ENCODE measurements at regions of chr6 and their contacts with region 1.

Region 1: GRCh38 chr6:140436013-140436811 is 1061.8 kb upstream of the CITED2 start:
- DNase-seq: peak; percentile 89
- H3K4me3 ChIP-seq: no peak overlapping the region
- H3K27me3 ChIP-seq: no peaks in the 10 kb centered on the region
- CTCF ChIP-seq: no peak

Region 2: GRCh38 chr6:140537819-140538705 is 101.8 kb after region 1 on chr6:
- CTCF ChIA-PET with region 1: no interaction called
- POLR2A ChIA-PET with region 1: interaction called, 13 read pairs
- DNase-seq: peak; percentile 100
- H3K4me3 ChIP-seq: no peak overlapping the region
- H3K27me3 ChIP-seq: no peaks in the 10 kb centered on the region
- CTCF ChIP-seq: no peak